ENCODE measurements at regions of chr5 and their contacts with region 1.

Region 1: DNA sequence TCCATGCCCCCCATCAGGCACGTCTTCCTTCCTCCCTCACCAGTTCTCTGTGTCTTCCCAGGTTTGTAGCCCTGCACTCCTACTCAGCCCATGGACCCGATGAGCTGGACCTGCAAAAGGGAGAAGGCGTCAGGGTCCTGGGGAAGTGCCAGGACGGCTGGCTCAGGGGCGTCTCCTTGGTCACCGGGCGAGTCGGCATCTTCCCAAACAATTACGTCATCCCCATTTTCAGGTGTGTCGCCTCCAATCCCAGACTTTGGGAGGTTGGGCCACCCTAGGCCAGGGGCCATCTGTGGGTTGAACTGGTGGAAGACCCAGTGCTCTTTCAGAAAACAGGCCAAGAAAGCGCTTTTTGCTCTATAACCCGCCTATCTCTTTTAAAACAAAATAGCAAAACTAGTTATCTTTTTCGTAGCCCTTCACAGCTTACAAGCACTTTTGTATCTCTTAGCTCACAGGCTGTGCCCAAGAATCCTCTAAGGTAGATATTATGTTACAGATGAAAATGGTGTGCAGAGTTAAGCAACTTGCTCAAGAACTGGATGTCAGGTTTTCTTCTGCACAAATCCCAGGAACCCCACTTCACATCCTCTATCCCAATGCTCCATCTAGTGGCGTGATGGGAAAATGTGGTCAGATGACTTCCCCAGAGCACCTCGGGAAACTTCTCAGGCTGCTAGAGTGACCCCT is 56.2 kb downstream of the PLAC8L1 start:
- DNase-seq: no peak
- ATAC-seq: peak; percentile 40

Region 2: DNA sequence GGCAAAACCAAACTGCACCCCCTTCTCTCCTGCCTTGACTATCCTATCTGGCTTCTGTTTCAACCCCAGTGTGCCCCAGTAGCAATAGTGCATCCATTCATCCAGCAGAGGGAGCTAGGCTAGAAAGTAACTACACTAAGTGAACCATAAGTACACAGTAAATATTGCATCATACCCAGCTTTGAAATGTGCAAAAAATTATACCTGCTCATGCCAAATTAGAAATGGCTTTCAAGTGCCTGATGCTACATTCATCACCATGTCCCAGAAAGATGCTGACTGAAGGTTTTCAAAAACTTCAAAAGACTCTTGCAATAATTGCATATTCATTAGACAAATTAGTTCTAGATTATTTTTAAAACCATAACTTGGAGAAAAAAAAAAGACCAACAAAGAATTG is 367.5 kb before region 1 on chr5:
- intact Hi-C with region 1: loop called (anchors 5 kb)
- DNase-seq: no peak
- ATAC-seq: peak; percentile 70

Region 3: DNA sequence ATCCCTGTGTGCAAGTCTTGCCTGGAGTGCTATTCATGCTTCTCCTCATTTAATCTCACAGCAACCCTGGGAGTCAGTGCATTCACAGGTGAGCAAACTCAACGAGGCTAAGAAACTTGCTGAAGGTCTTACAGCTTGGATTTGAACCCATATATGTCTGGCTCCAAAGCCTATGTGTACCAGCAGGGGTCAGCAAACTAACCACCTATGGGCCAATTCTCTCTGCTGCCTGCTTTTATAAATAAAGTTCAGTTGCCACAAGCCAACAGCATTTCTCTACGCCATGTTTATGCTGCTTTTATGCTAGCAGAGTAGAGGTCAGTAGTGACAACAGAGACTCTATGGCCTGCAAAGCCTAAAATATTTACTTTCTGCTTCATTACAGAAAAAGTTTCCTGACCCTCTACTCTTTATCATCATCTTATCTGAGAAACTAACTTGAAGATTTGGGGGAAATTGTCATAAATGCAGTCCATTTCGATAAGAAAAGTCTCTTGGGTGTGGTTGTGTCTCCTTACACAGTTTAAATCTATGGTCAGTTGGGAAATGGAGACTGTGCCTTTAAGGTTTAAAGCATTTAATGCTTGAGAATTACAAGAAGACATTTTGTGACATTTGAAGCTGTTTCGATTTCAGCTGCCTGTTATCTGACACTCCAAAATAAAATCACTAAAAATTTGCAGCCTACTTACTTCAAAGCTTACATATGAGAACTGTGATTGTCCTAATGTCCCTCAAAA is 351.7 kb before region 1 on chr5:
- intact Hi-C with region 1: loop called (anchors 5 kb)
- DNase-seq: no peak
- ATAC-seq: no peak

Region 4: GRCh38 chr5:145834917-145835847 is 214.0 kb before region 1 on chr5 and contains the start of gene PRELID2:
- intact Hi-C with region 1: loop called (anchors 5 kb)
- DNase-seq: peak; percentile 94
- ATAC-seq: peak; percentile 92
- total RNA-seq, gene PRELID2: 33.2 TPM

Region 5: DNA sequence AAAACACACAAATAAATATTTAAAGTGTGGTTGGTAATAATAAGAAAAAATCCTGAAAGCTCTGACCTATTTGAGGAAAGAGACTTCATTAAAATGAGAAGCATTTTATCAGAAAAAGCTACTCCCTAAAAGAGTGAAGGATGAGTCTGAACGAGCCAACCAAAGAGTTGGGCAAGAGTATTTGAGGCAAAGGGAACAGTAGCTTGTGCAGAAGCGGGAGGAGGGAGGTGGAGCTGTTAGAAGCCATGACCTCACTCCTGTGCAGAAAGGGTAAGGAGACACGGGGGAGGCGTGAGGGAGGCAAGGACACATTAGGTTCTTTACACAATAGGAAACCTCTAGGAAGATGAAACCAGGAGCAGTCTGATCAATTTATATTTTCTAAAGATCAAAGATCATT is 83.4 kb before region 1 on chr5:
- intact Hi-C with region 1: no loop called
- DNase-seq: no peak
- ATAC-seq: no peak